AG04450 (cell line): ENCODE measurements at regions of chr18 and their contacts with region 1.

Region 1: GRCh38 chr18:46009125-46009840 is 42.2 kb upstream of the EPG5 start:
- DNase-seq: no peak
- H3K4me3 ChIP-seq: no peak overlapping the region
- H3K27ac ChIP-seq: no peak overlapping the region
- H3K27me3 ChIP-seq: no peaks in the 10 kb centered on the region
- CTCF ChIP-seq: no peak

Region 2: GRCh38 chr18:45993389-45993788 is 15.9 kb before region 1 on chr18:
- CTCF ChIA-PET with region 1: no interaction called
- POLR2A ChIA-PET with region 1: interaction called, 11 read pairs
- DNase-seq: peak; percentile 33
- H3K4me3 ChIP-seq: no peak overlapping the region
- H3K27ac ChIP-seq: no peak overlapping the region
- H3K27me3 ChIP-seq: no peaks in the 10 kb centered on the region
- CTCF ChIP-seq: no peak